PC-9 (cell line): ENCODE measurements at regions of chr11 and their contacts with region 1.

Region 1: GRCh38 chr11:25981998-25982397 is 349.9 kb upstream of the ANO3 start:
- DNase-seq: peak in 1 of 2 experiments; percentile 4
- H3K4me3 ChIP-seq: no peak overlapping the region
- H3K27ac ChIP-seq: no peak overlapping the region
- H3K4me1 ChIP-seq: no peaks in the 10 kb centered on the region
- H3K27me3 ChIP-seq: no peaks in the 10 kb centered on the region
- CTCF ChIP-seq: peak; percentile 73

Region 2: GRCh38 chr11:24747275-24748251 is 1234.4 kb before region 1 on chr11:
- CTCF ChIA-PET with region 1: interaction called, 13 read pairs
- POLR2A ChIA-PET with region 1: no interaction called
- intact Hi-C with region 1: no loop called
- DNase-seq: no peak
- H3K4me3 ChIP-seq: no peak overlapping the region
- H3K27ac ChIP-seq: no peak overlapping the region
- H3K4me1 ChIP-seq: 0 out of 2 replicates have a peak, but pooled peaks cover 10% of the 10 kb centered on the region
- H3K27me3 ChIP-seq: no peaks in the 10 kb centered on the region
- CTCF ChIP-seq: no peak

Region 3: DNA sequence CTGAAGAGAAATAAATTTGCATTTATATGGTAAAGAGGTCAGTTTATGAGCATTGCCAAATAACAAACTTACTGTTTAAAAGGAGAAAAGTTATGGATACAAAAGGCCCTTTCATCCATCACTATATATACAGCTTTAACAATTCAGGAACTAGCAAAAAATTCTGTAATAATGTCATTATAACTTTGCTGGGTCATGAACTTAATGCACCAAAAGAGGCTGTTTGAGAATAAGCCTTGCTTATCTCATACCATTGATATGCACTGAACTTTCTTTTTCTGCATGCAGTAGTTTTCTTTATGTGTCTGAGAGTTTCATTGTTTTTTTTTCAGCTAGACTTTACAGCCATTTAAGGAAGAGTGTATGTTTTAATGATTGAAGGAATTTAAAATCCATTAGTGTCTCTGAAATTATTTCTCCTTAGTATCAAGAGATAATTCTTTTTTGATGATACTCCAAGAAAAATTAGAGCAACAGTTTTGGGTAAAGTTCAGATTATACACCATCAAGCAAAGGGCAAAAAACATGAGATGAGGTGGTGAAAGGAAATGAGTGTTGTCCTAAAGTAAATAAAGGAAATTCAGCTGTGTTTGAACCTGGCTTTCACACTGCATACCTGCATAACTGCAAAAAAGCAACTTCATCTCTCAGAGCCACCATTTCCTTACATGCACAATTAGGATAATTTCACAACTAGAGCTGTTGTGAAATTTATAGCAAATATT is 161.7 kb after region 1 on chr11:
- CTCF ChIA-PET with region 1: interaction called, 12 read pairs
- POLR2A ChIA-PET with region 1: no interaction called
- intact Hi-C with region 1: loop called (anchors 10 kb)
- DNase-seq: no peak
- H3K4me3 ChIP-seq: no peak overlapping the region
- H3K27ac ChIP-seq: no peak overlapping the region
- H3K4me1 ChIP-seq: no peaks in the 10 kb centered on the region
- H3K27me3 ChIP-seq: no peaks in the 10 kb centered on the region
- CTCF ChIP-seq: no peak

Region 4: DNA sequence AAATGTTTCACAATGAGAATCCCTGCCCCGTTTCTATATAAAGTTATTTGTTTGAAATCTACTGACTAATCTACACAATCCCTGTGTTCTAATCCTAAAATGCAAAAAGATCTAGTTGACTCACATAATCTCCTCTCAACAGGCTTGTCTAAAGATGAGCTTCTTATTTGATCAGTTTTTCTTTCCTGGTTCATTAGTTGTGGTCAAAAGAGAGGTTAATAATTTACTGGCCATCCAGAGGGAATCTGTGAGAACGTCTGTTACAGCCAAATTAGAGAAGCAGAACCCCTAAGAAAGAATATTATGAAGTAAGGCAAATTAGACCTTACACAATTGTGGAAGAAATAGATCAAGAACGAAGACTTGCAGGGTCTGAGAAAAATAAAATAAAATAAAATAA is 176.3 kb after region 1 on chr11:
- CTCF ChIA-PET with region 1: no interaction called
- POLR2A ChIA-PET with region 1: no interaction called
- intact Hi-C with region 1: no loop called
- DNase-seq: no peak
- H3K4me3 ChIP-seq: no peak overlapping the region
- H3K27ac ChIP-seq: no peak overlapping the region
- H3K4me1 ChIP-seq: no peaks in the 10 kb centered on the region
- H3K27me3 ChIP-seq: no peaks in the 10 kb centered on the region
- CTCF ChIP-seq: no peak

Region 5: GRCh38 chr11:26276798-26277424 is 294.9 kb after region 1 on chr11:
- CTCF ChIA-PET with region 1: no interaction called
- POLR2A ChIA-PET with region 1: no interaction called
- intact Hi-C with region 1: loop called (anchors 1 kb)
- DNase-seq: peak; percentile 40 to 47
- H3K4me3 ChIP-seq: no peak overlapping the region
- H3K27ac ChIP-seq: no peak overlapping the region
- H3K4me1 ChIP-seq: no peaks in the 10 kb centered on the region
- H3K27me3 ChIP-seq: no peaks in the 10 kb centered on the region
- CTCF ChIP-seq: peak; percentile 97

Region 6: DNA sequence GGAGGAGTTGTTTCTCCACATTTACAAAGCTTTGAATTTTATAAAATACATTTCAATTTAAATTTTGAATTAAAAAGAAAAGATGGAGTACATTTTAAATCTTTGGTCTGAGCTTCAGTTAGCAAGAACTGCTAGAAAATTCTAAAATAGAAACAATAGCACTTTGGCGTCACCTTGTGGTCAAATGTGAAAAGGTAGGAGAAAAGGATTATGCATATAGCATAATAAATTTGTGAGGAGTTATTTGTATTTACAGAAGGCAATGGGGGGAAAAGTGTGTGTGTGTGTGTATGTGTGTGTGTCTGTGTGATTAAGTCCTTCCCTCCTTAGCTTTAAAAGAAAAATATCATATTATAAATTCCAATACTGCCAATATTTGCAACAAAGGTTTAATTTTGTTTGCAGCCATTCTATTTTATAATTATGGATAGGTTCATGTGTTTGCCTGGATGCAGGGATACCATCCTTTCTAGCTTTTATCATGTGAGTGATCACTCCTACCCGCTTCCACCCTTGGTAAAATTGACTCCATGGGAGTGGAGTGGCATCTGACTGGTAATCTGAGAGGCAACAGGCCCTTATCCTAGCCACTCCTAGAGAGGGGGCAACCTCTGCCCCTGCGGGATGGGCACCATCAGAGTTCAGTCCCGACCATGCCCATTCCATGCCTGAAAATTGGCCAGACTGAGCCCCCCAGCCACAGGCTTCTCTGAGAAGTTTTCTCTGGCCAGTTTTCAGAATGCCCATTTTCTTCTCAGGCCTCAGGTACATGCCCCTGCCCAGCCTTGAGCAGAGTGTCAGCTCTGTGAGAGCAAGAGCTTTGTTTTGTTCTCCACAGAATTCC is 1504.2 kb after region 1 on chr11:
- CTCF ChIA-PET with region 1: no interaction called
- POLR2A ChIA-PET with region 1: no interaction called
- intact Hi-C with region 1: loop called (anchors 5 kb)
- DNase-seq: peak in 1 of 2 experiments; percentile 54
- H3K4me3 ChIP-seq: no peak overlapping the region
- H3K27ac ChIP-seq: no peak overlapping the region
- H3K4me1 ChIP-seq: no peaks in the 10 kb centered on the region
- H3K27me3 ChIP-seq: no peaks in the 10 kb centered on the region
- CTCF ChIP-seq: peak; percentile 95